ENCODE measurements at regions of chr14 and their contacts with region 1.

Region 1: DNA sequence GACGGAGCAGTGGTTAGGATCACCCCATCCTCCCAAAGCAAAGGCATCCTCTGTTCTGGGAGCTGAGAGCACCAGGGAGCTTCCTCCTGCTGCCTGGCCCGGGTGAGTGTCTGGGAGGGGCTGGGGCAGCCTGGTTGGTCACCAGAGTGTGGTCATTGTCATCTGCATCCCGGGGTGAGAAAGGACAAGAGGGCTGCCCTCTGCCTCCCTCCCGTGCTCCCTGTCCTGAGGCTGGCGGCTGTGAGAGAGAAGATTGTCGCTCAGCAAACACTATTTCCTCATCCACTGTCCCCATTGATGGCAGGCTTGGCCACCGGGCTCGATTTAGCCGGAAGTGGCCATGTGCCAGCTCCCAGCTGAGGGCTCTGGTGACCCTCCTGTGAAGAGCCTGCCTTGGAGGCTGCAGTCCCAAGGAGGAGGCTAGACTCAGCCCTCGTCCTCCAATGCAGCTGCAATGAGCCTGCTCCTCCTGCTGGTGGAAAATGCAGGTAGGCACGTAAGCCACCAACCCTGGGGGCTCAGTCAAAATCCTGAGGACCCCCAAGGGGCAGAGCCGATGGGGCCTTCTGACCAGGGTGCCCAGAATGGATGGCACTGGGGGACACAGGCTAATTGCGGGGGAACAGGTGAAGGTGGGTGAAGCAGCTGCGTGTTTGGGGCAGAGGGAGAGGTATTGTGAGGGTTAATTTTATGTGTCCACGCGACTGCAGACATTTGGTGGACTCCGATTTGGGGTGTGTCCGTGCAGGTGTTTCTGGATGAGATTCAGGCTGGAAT is 155.7 kb downstream of the KIF26A start:
- DNase-seq: no peak
- H3K4me3 ChIP-seq: no peak overlapping the region
- H3K27ac ChIP-seq: peak overlapping the region in 1 of 2 experiments; percentile 94; a peak in 1 of 4 replicates
- H3K4me1 ChIP-seq: peaks cover 3 to 87% of the 10 kb centered on the region in 2 experiments; a peak in 2 of 4 replicates
- H3K27me3 ChIP-seq: no peaks in the 10 kb centered on the region
- CTCF ChIP-seq: peak; percentile 21; the same call in 1 of the 2 replicates
- EP300 ChIP-seq: no peak
- RAD21 ChIP-seq: peak; percentile 48

Region 2: GRCh38 chr14:104370256-104370870 is 76.3 kb after region 1 on chr14:
- CTCF ChIA-PET with region 1: interaction called, 28 read pairs
- POLR2A ChIA-PET with region 1: no interaction called
- DNase-seq: peak; percentile 80
- H3K4me3 ChIP-seq: no peak overlapping the region
- H3K27ac ChIP-seq: no peak overlapping the region; a peak in 1 of 4 replicates
- H3K4me1 ChIP-seq: peaks cover 0 to 33% of the 10 kb centered on the region in 2 experiments; a peak in 1 of 4 replicates
- H3K27me3 ChIP-seq: no peaks in the 10 kb centered on the region
- CTCF ChIP-seq: no peak
- EP300 ChIP-seq: no peak
- RAD21 ChIP-seq: peak; percentile 79

Region 3: GRCh38 chr14:104405566-104406226 is 111.7 kb after region 1 on chr14:
- CTCF ChIA-PET with region 1: no interaction called
- POLR2A ChIA-PET with region 1: no interaction called
- DNase-seq: no peak
- H3K4me3 ChIP-seq: no peak overlapping the region
- H3K27ac ChIP-seq: no peak overlapping the region
- H3K4me1 ChIP-seq: no peaks in the 10 kb centered on the region
- H3K27me3 ChIP-seq: no peaks in the 10 kb centered on the region
- CTCF ChIP-seq: no peak
- EP300 ChIP-seq: no peak
- RAD21 ChIP-seq: no peak

Measured in SK-N-SH (cell line).